ENCODE measurements at regions of chr15 and their contacts with region 1.

Region 1: GRCh38 chr15:84588053-84588874 is 12.5 kb upstream of the ZSCAN2 start:
- DNase-seq: peak; percentile 97 to 99
- H3K4me3 ChIP-seq: peak overlapping the region; percentile 7
- H3K4me1 ChIP-seq: peaks cover 3% of the 10 kb centered on the region
- H3K27me3 ChIP-seq: no peaks in the 10 kb centered on the region

Region 2: GRCh38 chr15:83475551-83475950 is 1112.7 kb before region 1 on chr15:
- in situ Hi-C with region 1: no loop called
- DNase-seq: no peak
- H3K4me3 ChIP-seq: no peak overlapping the region
- H3K4me1 ChIP-seq: peaks cover 3% of the 10 kb centered on the region; the same call in 1 of the 2 replicates
- H3K27me3 ChIP-seq: no peaks in the 10 kb centered on the region

Region 3: GRCh38 chr15:84929744-84930371 is 341.6 kb after region 1 on chr15:
- in situ Hi-C with region 1: loop called (anchors 5 kb)
- DNase-seq: no peak
- H3K4me3 ChIP-seq: no peak overlapping the region
- H3K4me1 ChIP-seq: no peaks in the 10 kb centered on the region
- H3K27me3 ChIP-seq: no peaks in the 10 kb centered on the region